ENCODE measurements at regions of chr19 and their contacts with region 1.

Region 1: GRCh38 chr19:11137542-11138384 is 17.8 kb downstream of the SPC24 start:
- DNase-seq: peak; percentile 88 to 91 (median 89)
- ATAC-seq: peak; percentile 33 to 62 (median 58)
- H3K4me3 ChIP-seq: peak overlapping the region in 9 of 12 donors; percentile 15 to 46 (median 32)
- H3K27ac ChIP-seq: peak overlapping the region; percentile 78 to 100 (median 93)
- H3K4me1 ChIP-seq: peaks cover 17 to 58% (median 41%) of the 10 kb centered on the region in 12 donors
- H3K27me3 ChIP-seq: no peaks in the 10 kb centered on the region
- CTCF ChIP-seq: peak; percentile 56 to 86 (median 77)
- POLR2A ChIP-seq: no peak

Region 2: DNA sequence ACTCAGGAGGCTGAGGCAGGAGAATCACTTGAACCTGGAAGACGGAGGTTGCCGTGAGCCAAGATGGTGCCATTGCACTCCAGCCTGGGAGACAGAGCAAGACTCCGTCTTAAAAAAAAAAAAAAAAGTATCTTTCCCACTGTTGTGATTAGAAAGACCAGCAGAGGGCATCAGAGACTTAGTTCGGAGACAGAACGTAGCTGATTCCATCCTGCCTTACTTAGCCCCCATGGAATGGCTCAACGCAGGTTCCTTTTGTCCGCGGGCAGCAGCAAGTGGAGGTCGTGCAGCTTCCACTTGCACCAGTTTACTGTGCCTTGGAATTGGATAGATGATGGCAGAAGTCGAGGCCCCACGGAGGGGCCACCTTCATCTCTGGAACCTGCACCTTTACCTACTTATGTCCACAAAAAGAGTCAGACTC is 201.1 kb before region 1 on chr19:
- intact Hi-C with region 1: loop called in 2 of 10 experiments (anchors 5 to 10 kb)
- DNase-seq: no peak
- ATAC-seq: peak; percentile 60 to 84 (median 79)
- H3K4me3 ChIP-seq: peak overlapping the region in 2 of 12 donors; percentile 0 to 26
- H3K27ac ChIP-seq: no peak overlapping the region
- H3K4me1 ChIP-seq: peaks cover 0 to 8% (median 0%) of the 10 kb centered on the region in 12 donors
- H3K27me3 ChIP-seq: no peaks in the 10 kb centered on the region
- CTCF ChIP-seq: peak; percentile 45 to 63 (median 58)
- POLR2A ChIP-seq: no peak

Region 3: DNA sequence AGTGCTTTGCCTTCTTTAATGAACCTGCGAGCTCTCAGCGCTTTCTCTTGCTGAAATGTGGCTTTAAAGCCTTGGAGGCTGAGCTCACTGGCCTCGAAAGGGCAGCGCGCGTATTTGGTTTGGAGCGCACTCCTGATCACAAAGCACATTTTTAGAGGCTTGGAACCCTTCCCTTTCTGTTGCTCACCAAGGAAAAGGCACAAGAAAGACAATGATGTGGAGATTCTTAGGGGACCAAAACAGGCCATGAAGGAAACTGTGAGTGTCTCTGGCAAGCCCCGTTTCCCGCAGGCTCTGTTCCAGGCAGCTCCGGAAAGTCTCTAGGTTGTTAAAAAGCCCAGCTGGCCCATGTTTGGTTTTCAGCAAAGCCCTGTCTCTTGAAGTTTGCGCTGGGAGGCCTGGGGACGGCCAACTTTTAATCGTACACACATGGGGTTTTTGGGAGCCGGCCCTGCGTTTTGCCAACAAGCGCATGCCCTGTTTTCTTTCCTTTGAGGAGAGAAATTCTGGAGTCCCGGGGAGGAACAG is 27.2 kb after region 1 on chr19:
- intact Hi-C with region 1: loop called in 1 of 10 experiments (anchors 2 kb)
- DNase-seq: peak; percentile 78 to 90 (median 85)
- ATAC-seq: peak; percentile 43 to 82 (median 74)
- H3K4me3 ChIP-seq: peak overlapping the region in 6 of 12 donors; percentile 3 to 25 (median 13)
- H3K27ac ChIP-seq: peak overlapping the region; percentile 69 to 88 (median 82)
- H3K4me1 ChIP-seq: peaks cover 3 to 44% (median 36%) of the 10 kb centered on the region in 12 donors
- H3K27me3 ChIP-seq: no peaks in the 10 kb centered on the region
- CTCF ChIP-seq: no peak
- POLR2A ChIP-seq: no peak

Region 4: DNA sequence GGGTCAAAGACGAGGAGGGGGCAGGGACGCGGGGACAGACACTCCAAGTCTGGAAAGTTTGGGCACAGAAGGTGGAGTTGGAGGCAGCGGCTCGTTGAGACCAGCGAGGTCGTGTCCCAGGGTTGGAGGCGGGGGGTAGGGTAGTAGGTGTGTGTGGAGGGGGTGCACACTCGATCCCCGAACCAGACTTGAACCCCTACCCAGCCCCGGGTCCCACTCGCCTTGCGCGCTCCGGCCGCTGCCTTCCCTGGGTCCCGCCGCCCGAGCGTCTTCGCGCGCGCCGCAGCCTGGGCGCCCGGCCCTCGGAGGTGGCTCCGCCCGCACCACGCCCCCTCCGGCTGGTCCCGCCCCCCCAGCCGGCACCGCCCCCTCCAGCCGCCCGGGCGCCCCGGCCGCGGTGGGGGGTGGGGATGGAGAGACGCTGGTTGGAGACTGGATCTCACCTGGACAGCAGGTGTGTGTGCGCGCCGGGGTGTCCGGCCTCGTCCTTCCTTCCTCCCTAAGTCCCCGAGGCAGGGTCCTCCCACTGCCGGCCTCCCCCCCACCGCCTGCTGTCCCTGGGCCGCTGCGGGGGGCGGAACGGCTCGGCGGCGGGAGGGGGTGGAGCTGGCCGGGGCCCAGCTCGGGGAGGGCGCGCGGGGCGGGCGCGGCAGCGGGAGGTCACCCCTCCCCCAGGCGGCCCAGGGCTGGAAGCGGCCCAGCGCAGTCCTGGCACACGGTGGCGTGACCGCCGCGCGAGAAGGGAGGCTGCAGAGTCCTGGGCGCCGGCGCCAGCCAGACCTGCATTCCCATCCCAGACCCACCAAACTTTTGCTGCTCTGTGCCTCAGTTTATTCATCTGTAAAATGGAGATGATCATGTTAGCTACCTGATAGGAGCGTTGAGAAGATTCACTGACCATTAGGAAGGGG is 59.8 kb after region 1 on chr19 and contains the start of gene KANK2:
- intact Hi-C with region 1: loop called in 7 of 10 experiments (anchors 2 to 5 kb)
- DNase-seq: peak; percentile 88 to 95 (median 91)
- ATAC-seq: peak; percentile 63 to 90 (median 82)
- H3K4me3 ChIP-seq: peak within 1 kb of the TSS; percentile 27 to 96 (median 77)
- H3K27ac ChIP-seq: peak within 1 kb of the TSS; percentile 81 to 100 (median 94)
- H3K4me1 ChIP-seq: peaks cover 8 to 63% (median 53%) of the 10 kb centered on the region in 12 donors
- H3K27me3 ChIP-seq: peaks cover 0 to 6% (median 0%) of the 10 kb centered on the region in 9 donors
- CTCF ChIP-seq: peak in 4 of 12 donors; percentile 8 to 31 (median 22)
- POLR2A ChIP-seq: peak; percentile 78 to 97
- total RNA-seq, gene KANK2: 232 to 1,831 (median 296) TPM

Region 5: DNA sequence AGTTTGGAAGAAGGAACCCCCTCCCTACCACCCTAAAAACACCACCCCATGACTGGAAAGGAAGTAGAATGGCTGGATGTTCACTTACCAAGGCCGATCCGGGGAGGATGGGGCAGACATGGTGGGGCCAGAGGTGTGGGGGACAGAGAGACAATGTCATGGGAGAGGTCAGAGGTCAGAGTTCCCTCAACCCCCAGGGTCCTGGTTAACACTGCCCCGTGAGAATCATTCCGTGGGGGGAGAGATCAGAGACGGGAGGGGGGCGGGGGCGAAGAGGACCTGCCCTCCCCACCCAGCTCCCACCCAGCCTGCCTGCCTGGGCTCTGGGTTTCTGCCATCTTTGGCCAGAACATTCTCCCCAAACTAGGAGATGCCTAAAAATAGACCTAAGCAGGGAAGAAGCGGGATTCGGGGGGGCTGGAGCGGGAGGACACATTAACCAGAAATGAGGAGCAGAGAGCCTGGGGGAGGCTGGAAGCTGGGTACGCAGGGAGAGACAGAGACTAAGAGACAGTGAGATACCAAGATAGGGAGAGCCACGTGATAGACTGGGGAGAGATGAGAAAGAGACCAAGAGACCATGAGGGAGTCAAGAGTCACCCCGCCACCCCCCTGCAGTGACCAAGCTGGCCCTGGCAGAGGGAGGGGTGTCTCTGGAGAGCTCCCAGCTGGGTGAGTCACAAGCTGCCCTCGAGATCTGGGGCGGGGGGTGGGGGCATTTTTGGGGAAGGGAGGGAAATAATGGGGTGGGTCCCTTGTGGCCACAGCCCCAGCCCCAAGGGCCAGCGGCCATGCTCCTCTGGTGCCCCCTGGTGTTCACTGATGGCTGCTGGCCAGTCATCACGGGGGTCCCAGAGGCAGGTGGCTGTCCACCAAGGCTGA is 65.7 kb after region 1 on chr19:
- intact Hi-C with region 1: loop called (anchors 1 to 5 kb)
- DNase-seq: peak; percentile 82 to 89 (median 88)
- ATAC-seq: peak; percentile 75 to 83 (median 78)
- H3K4me3 ChIP-seq: peak overlapping the region in 9 of 12 donors; percentile 1 to 43 (median 35)
- H3K27ac ChIP-seq: peak overlapping the region; percentile 78 to 97 (median 90)
- H3K4me1 ChIP-seq: peaks cover 0 to 42% (median 26%) of the 10 kb centered on the region in 12 donors
- H3K27me3 ChIP-seq: no peaks in the 10 kb centered on the region
- CTCF ChIP-seq: peak; percentile 72 to 94 (median 86)
- POLR2A ChIP-seq: no peak

Region 6: DNA sequence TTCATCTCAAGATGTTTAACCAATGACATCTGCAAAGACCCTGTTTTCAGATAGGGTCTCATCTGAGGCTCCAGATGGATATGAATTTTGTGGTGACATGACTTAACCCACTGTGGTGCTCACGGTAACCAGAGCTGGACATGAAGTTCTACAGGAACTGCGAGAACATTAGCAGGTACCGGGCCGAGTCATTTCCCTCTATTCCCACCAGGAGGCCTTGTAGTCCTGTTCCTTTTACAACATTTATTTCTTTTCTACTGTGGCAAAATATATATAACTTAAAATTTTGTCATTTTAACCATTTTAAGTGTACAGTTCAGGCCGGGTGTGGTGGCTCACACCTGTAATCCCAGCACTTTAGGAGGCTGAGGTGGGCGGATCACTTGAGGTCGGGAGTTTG is 150.6 kb after region 1 on chr19:
- intact Hi-C with region 1: loop called in 4 of 10 experiments (anchors 5 to 10 kb)
- DNase-seq: no peak
- ATAC-seq: no peak
- H3K4me3 ChIP-seq: no peak overlapping the region
- H3K27ac ChIP-seq: no peak overlapping the region
- H3K4me1 ChIP-seq: peaks cover 0 to 24% (median 9%) of the 10 kb centered on the region in 12 donors
- H3K27me3 ChIP-seq: no peaks in the 10 kb centered on the region
- CTCF ChIP-seq: peak in 10 of 12 donors; percentile 14 to 39 (median 30)
- POLR2A ChIP-seq: no peak

Region 7: GRCh38 chr19:11435058-11435832 is 297.5 kb after region 1 on chr19 and contains the starts of genes ODAD3 and PRKCSH:
- intact Hi-C with region 1: loop called in 1 of 10 experiments (anchors 10 kb)
- DNase-seq: peak; percentile 99
- ATAC-seq: peak; percentile 98 to 99 (median 98)
- H3K4me3 ChIP-seq: peak within 1 kb of the TSS; percentile 64 to 90 (median 80)
- H3K27ac ChIP-seq: peak within 1 kb of the TSS in 11 of 12 donors; percentile 73 to 86 (median 81)
- H3K4me1 ChIP-seq: peaks cover 0 to 22% (median 17%) of the 10 kb centered on the region in 12 donors
- H3K27me3 ChIP-seq: no peaks in the 10 kb centered on the region
- CTCF ChIP-seq: peak; percentile 69 to 90 (median 87)
- POLR2A ChIP-seq: peak in 1 of 2 donors; percentile 53
- total RNA-seq, gene ODAD3: 0.18 to 0.69 (median 0.31) TPM in 7 of 9 donors, not detected in the others
- total RNA-seq, gene PRKCSH: 69.3 to 210 (median 120) TPM

Measured in heart left ventricle (tissue), 16 donors.